IMR-90 (cell line): ENCODE measurements at regions of chr2 and their contacts with region 1.

Region 1: GRCh38 chr2:210195101-210195852 is 24.1 kb upstream of the KANSL1L start:
- DNase-seq: peak; percentile 58
- ATAC-seq: no peak
- H3K4me3 ChIP-seq: peak overlapping the region; percentile 42; the same call in 1 of the 2 replicates
- H3K27ac ChIP-seq: no peak overlapping the region
- H3K4me1 ChIP-seq: no peaks in the 10 kb centered on the region
- H3K27me3 ChIP-seq: no peaks in the 10 kb centered on the region
- CTCF ChIP-seq: peak; percentile 81
- POLR2A ChIP-seq: no peak
- RAD21 ChIP-seq: peak; percentile 77

Region 2: DNA sequence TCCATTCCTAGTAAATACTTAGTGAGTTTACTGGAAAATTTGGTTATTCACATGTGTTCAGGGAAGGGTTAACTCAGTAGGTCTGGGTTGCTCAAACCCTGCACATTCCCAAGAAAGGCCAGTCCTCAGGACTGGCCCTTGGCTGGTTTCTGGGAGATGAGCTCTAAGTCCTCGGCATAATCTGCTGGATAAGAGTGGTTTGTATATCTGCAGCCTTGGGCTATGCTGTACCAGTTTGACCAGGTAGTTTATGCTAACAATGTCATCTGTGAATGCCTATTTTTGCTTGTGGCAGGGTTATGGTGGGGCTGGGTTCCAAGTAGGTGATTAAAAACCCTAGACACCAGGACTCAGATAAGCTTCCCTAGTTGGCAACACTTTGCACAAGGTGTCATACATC is 1796.1 kb before region 1 on chr2:
- CTCF ChIA-PET with region 1: no interaction called
- POLR2A ChIA-PET with region 1: no interaction called
- dilution Hi-C with region 1: no loop called
- in situ Hi-C with region 1: no loop called
- intact Hi-C with region 1: loop called (anchors 5 kb)
- DNase-seq: no peak
- ATAC-seq: no peak
- H3K4me3 ChIP-seq: no peak overlapping the region
- H3K27ac ChIP-seq: no peak overlapping the region
- H3K4me1 ChIP-seq: no peaks in the 10 kb centered on the region
- H3K27me3 ChIP-seq: peaks cover 2% of the 10 kb centered on the region
- CTCF ChIP-seq: no peak
- POLR2A ChIP-seq: no peak
- RAD21 ChIP-seq: no peak

Region 3: DNA sequence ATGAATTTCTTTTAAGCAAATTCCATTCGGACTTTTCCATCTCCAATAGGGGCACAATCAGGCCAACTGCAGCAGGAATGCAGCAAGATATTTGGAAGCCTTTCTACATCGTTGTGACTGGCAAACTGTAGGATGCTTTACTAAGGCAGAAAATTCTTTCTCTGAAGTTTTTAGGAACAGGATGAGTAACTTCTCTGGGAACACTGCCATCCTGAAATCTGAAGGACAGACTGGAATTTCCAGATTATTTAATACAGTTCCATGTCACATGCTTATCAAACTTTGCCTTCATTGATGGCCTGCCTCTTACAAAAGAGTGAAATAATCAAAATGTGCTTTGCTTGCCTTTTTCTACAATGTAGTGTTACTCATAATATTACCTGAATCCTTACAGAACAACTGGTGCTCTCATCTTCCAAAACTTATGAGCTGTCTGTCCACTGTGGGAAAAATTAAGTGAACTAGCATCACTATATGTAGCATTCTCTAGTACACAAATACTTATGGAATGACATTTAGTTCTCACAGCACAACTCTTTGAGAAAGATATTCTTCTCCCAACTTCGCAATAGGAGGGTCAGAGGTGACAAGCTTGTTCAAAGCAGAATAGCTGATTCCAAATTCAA is 803.4 kb before region 1 on chr2:
- CTCF ChIA-PET with region 1: no interaction called
- POLR2A ChIA-PET with region 1: no interaction called
- dilution Hi-C with region 1: no loop called
- in situ Hi-C with region 1: no loop called
- intact Hi-C with region 1: no loop called
- DNase-seq: peak; percentile 0
- ATAC-seq: no peak
- H3K4me3 ChIP-seq: no peak overlapping the region
- H3K27ac ChIP-seq: no peak overlapping the region
- H3K4me1 ChIP-seq: no peaks in the 10 kb centered on the region
- H3K27me3 ChIP-seq: no peaks in the 10 kb centered on the region
- CTCF ChIP-seq: no peak
- POLR2A ChIP-seq: no peak
- RAD21 ChIP-seq: no peak

Region 4: DNA sequence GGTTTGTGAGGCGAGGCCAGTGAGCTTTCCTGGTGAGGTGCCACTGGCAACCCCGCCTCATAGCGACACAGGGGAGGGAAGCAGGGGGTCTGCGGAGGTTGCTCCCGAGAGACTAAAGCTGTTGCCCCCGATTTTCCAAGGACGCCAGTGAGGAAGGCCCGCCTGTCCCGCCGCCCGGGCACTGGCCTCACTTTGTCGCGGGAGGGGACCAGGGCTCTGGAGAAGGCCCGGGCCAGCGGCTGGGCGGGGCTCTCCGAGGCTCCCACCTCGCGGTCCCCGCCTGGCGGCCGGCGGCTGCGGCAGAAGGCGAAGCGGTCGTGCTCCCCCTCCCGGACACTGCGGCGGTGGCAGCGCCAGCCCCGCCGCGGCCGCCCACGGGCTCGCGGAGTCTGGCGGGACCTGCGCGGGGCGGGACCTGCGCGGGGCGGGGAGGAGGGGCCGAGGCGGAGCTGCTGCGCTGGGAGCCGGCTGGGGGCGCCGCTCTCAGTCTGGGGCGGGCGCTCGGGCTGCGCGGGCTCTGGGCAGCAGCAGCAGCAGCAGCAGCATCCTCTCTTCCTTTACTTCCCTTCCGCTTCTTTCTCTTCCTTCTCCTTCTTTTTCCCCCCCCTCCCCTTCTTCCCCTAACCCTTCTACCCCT is 771.6 kb before region 1 on chr2 and contains the start of gene MAP2:
- CTCF ChIA-PET with region 1: no interaction called
- POLR2A ChIA-PET with region 1: no interaction called
- dilution Hi-C with region 1: no loop called
- in situ Hi-C with region 1: no loop called
- intact Hi-C with region 1: loop called (anchors 2 kb)
- DNase-seq: peak; percentile 60
- ATAC-seq: peak; percentile 99
- H3K4me3 ChIP-seq: peak within 1 kb of the TSS; percentile 43
- H3K27ac ChIP-seq: no peak within 1 kb of the TSS
- H3K4me1 ChIP-seq: peaks cover 3% of the 10 kb centered on the region; the same call in 1 of the 2 replicates
- H3K27me3 ChIP-seq: no peaks in the 10 kb centered on the region
- CTCF ChIP-seq: peak; percentile 99
- POLR2A ChIP-seq: no peak
- RAD21 ChIP-seq: peak; percentile 58
- total RNA-seq, gene MAP2: 0.28 and 0.36 TPM in 2 replicates

Region 5: GRCh38 chr2:209577376-209578357 is 617.6 kb before region 1 on chr2:
- CTCF ChIA-PET with region 1: no interaction called
- POLR2A ChIA-PET with region 1: no interaction called
- dilution Hi-C with region 1: no loop called
- in situ Hi-C with region 1: no loop called
- intact Hi-C with region 1: loop called (anchors 1 kb)
- DNase-seq: peak; percentile 6
- ATAC-seq: no peak
- H3K4me3 ChIP-seq: no peak overlapping the region
- H3K27ac ChIP-seq: no peak overlapping the region
- H3K4me1 ChIP-seq: no peaks in the 10 kb centered on the region
- H3K27me3 ChIP-seq: no peaks in the 10 kb centered on the region
- CTCF ChIP-seq: peak; percentile 52
- POLR2A ChIP-seq: no peak
- RAD21 ChIP-seq: peak; percentile 27; the same call in 1 of the 2 replicates

Region 6: DNA sequence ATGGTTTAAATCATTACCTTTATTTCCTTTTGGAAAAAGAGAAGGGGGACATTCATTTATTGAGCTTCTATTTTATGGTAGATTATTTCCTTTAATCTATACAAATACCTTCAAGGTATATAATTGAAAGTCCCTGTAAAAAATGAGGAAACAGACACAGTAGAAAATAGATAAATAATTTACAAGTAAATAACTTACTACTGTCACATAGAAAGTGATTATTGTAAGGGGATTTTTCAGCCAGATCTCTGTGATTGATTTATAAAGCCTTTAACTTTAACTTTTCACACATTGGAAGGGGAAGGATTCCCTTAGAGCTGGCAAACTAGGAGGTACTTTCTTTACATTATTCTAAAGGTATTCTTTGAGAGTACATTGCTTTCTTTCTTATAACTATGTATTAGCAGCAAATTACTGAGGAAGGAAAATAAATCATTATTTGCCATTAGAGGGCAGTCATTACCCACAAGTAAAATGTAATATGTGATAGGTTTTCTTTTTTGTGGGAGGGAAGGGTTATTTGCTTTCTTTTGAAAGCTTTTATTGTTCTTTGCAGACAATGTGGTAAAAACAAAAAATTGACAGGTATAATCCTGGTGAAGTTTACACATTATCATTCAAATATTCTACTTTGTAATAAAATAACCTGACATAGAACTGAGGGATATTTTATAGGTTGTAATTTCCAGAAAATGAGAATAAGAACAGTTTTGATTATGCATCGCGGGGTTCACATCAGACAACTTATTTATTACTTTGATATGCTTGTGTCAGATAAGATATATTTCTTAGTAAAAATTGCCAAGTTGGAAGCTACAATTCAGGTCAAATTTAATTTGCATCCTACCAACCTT is 217.7 kb before region 1 on chr2:
- CTCF ChIA-PET with region 1: interaction called, 12 read pairs
- POLR2A ChIA-PET with region 1: no interaction called
- dilution Hi-C with region 1: no loop called
- in situ Hi-C with region 1: loop called (anchors 5 kb)
- intact Hi-C with region 1: loop called (anchors 1 kb)
- DNase-seq: peak; percentile 44
- ATAC-seq: peak; percentile 54; the same call in 1 of the 2 replicates
- H3K4me3 ChIP-seq: no peak overlapping the region
- H3K27ac ChIP-seq: no peak overlapping the region
- H3K4me1 ChIP-seq: no peaks in the 10 kb centered on the region
- H3K27me3 ChIP-seq: no peaks in the 10 kb centered on the region; the same call in 1 of the 2 replicates
- CTCF ChIP-seq: peak; percentile 60
- POLR2A ChIP-seq: no peak
- RAD21 ChIP-seq: peak; percentile 68

Region 7: GRCh38 chr2:210072922-210073509 is 122.3 kb before region 1 on chr2:
- CTCF ChIA-PET with region 1: interaction called, 3 read pairs
- POLR2A ChIA-PET with region 1: no interaction called
- dilution Hi-C with region 1: no loop called
- in situ Hi-C with region 1: no loop called
- intact Hi-C with region 1: loop called (anchors 1 kb)
- DNase-seq: peak; percentile 60
- ATAC-seq: peak; percentile 73
- H3K4me3 ChIP-seq: no peak overlapping the region
- H3K27ac ChIP-seq: no peak overlapping the region
- H3K4me1 ChIP-seq: no peaks in the 10 kb centered on the region; the same call in 1 of the 2 replicates
- H3K27me3 ChIP-seq: no peaks in the 10 kb centered on the region
- CTCF ChIP-seq: peak; percentile 74
- POLR2A ChIP-seq: no peak
- RAD21 ChIP-seq: peak; percentile 53

Region 8: DNA sequence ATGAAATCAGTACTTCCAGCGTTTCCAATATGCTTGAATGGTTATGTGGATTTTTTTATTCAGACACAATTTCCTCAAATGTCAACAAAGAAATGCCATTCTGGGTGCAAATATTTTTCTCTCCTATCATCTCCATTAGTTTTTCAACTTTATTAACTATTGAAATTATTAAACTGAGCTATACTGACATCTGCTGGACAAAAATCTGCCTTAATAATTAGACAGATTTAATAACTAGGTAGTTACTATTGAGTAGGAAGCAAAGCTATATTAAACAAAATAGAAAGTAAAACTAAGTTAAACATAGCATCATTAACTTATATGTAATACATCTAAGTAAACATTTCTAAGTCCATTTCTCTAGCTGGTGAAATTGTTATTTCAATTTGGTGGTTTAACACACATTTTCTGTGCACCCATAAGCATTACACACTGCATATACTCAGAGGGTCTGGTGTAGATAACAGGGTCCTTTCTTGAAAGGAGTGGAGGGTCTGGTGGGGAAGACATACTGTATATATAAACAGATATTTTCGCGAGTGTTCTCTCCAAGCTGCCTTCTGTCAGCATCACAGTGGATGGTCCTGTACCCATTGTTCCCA is 204.3 kb after region 1 on chr2:
- CTCF ChIA-PET with region 1: no interaction called
- POLR2A ChIA-PET with region 1: no interaction called
- dilution Hi-C with region 1: no loop called
- in situ Hi-C with region 1: no loop called
- intact Hi-C with region 1: loop called (anchors 2 kb)
- DNase-seq: peak; percentile 7
- ATAC-seq: peak; percentile 37; the same call in 1 of the 2 replicates
- H3K4me3 ChIP-seq: no peak overlapping the region
- H3K27ac ChIP-seq: no peak overlapping the region
- H3K4me1 ChIP-seq: no peaks in the 10 kb centered on the region
- H3K27me3 ChIP-seq: no peaks in the 10 kb centered on the region
- CTCF ChIP-seq: peak; percentile 45
- POLR2A ChIP-seq: no peak
- RAD21 ChIP-seq: no peak